H1 (cell line): ENCODE measurements at regions of chr16 and their contacts with region 1.

Region 1: GRCh38 chr16:75432828-75433731 is at the start of gene CFDP1:
- DNase-seq: peak; percentile 89 to 97
- H3K4me3 ChIP-seq: peak within 1 kb of the TSS; percentile 74 to 95 (median 83)
- H3K27ac ChIP-seq: peak within 1 kb of the TSS; percentile 93
- H3K4me1 ChIP-seq: peaks cover 0 to 7% (median 3%) of the 10 kb centered on the region in 4 experiments; a peak in 4 of 7 replicates
- H3K27me3 ChIP-seq: no peaks in the 10 kb centered on the region
- CTCF ChIP-seq: no peak
- EP300 ChIP-seq: 0 out of 3 replicates have a peak, but pooled peaks of 1 of the 2 experiments have one; percentile 55
- POLR2A ChIP-seq: peak in 1 of 2 experiments; percentile 71; a peak in 1 of 3 replicates
- RAD21 ChIP-seq: no peak
- total RNA-seq, gene CFDP1: 76.9 and 77.3 TPM in 2 replicates

Region 2: GRCh38 chr16:75385507-75386152 is 47.5 kb before region 1 on chr16:
- CTCF ChIA-PET with region 1: no interaction called
- POLR2A ChIA-PET with region 1: no interaction called
- DNase-seq: no peak
- H3K4me3 ChIP-seq: no peak overlapping the region
- H3K27ac ChIP-seq: no peak overlapping the region
- H3K4me1 ChIP-seq: no peaks in the 10 kb centered on the region
- H3K27me3 ChIP-seq: no peaks in the 10 kb centered on the region
- CTCF ChIP-seq: peak in 2 of 3 experiments; percentile 32 to 47; a peak in 2 of 4 replicates
- EP300 ChIP-seq: no peak
- POLR2A ChIP-seq: no peak
- RAD21 ChIP-seq: peak; percentile 64 to 67

Region 3: DNA sequence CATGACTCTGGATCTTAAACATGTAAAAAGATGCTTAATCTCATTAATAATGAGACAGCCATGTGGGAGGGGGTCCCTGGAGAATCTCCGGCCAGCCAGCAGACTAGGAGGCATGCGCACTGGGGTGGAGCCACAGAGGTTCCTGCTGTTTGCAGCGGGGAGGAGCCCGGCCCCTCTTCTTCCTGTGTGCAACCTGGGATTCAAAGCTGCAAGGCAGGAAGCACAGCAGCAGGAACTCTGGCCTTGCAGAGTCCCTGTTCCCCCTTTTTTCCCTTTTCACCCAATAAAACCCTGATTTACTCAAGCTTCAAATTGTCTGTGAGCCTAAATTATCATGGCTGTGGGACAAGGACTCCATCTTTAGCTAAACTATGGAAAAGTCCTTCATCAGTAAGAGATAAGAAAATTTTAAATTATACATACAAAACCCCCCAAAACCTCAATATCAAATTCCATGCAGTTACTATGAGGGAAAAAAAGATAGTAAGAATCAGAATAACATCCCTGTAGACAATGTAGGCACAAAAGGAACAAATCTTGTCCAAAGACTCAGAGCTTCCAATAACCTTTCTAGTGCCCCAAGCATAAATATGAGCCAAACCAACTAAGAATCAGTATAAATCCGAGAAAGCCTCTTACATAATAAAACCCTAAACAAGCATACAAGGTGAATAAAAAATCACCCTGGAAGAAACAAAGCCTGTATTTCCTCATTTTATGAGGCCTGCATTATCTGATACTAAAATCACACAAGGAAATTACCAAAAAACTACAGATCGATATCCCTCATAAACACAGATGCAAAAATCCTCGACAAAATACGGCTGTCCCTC is 11.9 kb before region 1 on chr16:
- CTCF ChIA-PET with region 1: interaction called, 4 read pairs
- POLR2A ChIA-PET with region 1: interaction called, 34 read pairs
- DNase-seq: peak; percentile 53 to 88
- H3K4me3 ChIP-seq: peak overlapping the region in 1 of 4 experiments; percentile 39; a peak in 1 of 8 replicates
- H3K27ac ChIP-seq: no peak overlapping the region
- H3K4me1 ChIP-seq: peaks cover 0 to 8% (median 2%) of the 10 kb centered on the region in 4 experiments; a peak in 3 of 7 replicates
- H3K27me3 ChIP-seq: no peaks in the 10 kb centered on the region
- CTCF ChIP-seq: no peak
- EP300 ChIP-seq: no peak
- POLR2A ChIP-seq: peak in 1 of 2 experiments; percentile 57; a peak in 1 of 3 replicates
- RAD21 ChIP-seq: no peak

Region 4: DNA sequence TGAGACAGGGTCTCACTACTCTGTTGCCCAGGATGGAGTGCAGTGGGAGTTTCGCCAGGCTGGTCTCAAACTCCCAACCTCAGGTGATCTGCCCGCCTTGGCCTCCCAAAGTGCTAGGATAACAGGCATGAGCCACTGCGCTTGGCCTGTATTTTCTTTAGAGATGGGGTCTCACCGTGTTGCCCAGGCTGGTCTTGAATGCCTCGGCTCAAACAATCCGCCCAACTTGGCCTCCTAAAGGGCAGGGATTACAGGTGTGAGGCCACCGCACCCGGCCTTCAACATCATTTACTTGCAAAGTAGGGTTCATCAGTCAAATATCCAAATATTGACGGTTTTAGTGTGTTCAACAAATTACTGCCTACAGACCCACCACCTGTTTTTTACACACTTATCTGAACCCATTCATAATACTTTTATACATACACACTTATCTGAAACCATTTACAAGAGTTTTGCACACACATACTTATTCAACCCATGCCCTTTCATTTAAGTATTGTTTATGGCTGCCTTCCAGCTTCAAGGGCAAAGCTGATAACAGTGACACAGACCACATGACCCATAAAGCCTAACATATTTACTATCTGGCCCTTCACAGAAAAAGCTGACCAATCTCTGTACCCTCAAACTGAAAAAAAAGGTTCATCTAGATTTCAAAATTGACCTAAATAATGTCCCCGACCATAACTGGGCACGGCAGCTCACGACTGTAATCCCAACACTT is 19.5 kb after region 1 on chr16:
- CTCF ChIA-PET with region 1: interaction called, 5 read pairs
- POLR2A ChIA-PET with region 1: interaction called, 21 read pairs
- DNase-seq: no peak
- H3K4me3 ChIP-seq: no peak overlapping the region
- H3K27ac ChIP-seq: no peak overlapping the region
- H3K4me1 ChIP-seq: peaks cover 0 to 5% (median 2%) of the 10 kb centered on the region in 4 experiments; a peak in 4 of 7 replicates
- H3K27me3 ChIP-seq: no peaks in the 10 kb centered on the region
- CTCF ChIP-seq: no peak
- EP300 ChIP-seq: no peak
- POLR2A ChIP-seq: no peak
- RAD21 ChIP-seq: no peak

Region 5: GRCh38 chr16:75495076-75495674 is 62.1 kb after region 1 on chr16 and contains the start of gene CHST6:
- CTCF ChIA-PET with region 1: interaction called, 3 read pairs
- POLR2A ChIA-PET with region 1: interaction called, 16 read pairs
- DNase-seq: peak in 1 of 2 experiments; percentile 91
- H3K4me3 ChIP-seq: peak within 1 kb of the TSS; percentile 66 to 87 (median 78)
- H3K27ac ChIP-seq: peak within 1 kb of the TSS; percentile 25; the same call in 1 of the 2 replicates
- H3K4me1 ChIP-seq: peaks cover 0 to 6% (median under 1%) of the 10 kb centered on the region in 4 experiments; a peak in 3 of 7 replicates
- H3K27me3 ChIP-seq: 0 out of 7 replicates have a peak, but pooled peaks cover 0 to 2% (median 0%) of the 10 kb centered on the region in 4 experiments
- CTCF ChIP-seq: no peak
- EP300 ChIP-seq: no peak
- POLR2A ChIP-seq: peak; percentile 87 to 91
- RAD21 ChIP-seq: no peak; a peak in 1 of 4 replicates
- total RNA-seq, gene CHST6: 25.4 and 26.4 TPM in 2 replicates